ENCODE measurements at regions of chr3 and their contacts with region 1.

Region 1: GRCh38 chr3:27712136-27713077 is 9.7 kb downstream of the EOMES start:
- DNase-seq: peak; percentile 72 to 73
- ATAC-seq: peak; percentile 93 to 97 (median 96)
- H3K4me3 ChIP-seq: peak overlapping the region; percentile 43 to 69 (median 60)
- H3K27ac ChIP-seq: peak overlapping the region in 1 of 10 donors; percentile 80
- H3K4me1 ChIP-seq: peaks cover 5 to 33% (median 22%) of the 10 kb centered on the region in 9 donors
- H3K27me3 ChIP-seq: peaks cover 0 to 89% (median 63%) of the 10 kb centered on the region in 7 donors
- CTCF ChIP-seq: peak; percentile 48 to 85 (median 80)

Region 2: DNA sequence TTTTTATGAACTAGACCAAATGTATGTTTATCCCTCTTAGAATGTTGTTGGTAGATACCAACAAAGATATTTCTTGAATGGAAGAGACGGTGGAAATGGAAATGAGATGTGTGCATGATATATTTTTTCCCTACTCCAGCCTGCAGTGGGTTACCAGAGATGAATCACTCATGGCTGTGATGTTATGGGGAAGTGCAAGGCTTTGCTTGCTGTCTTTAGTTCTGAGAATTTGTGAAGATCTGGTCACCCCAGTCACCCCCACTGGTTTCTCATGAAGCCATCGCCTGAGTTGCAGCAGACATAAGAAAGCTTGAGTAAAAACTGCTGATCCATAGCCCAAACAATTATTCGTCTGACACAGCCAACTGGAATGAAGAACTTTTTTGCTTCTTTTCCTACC is 87.9 kb after region 1 on chr3:
- intact Hi-C with region 1: no loop called
- DNase-seq: no peak
- ATAC-seq: no peak
- H3K4me3 ChIP-seq: no peak overlapping the region
- H3K27ac ChIP-seq: no peak overlapping the region
- H3K4me1 ChIP-seq: no peaks in the 10 kb centered on the region
- H3K27me3 ChIP-seq: peaks cover 0 to 3% (median 0%) of the 10 kb centered on the region in 7 donors
- CTCF ChIP-seq: no peak

Region 3: GRCh38 chr3:28286595-28286994 is 574.2 kb after region 1 on chr3:
- intact Hi-C with region 1: loop called in 4 of 10 experiments (anchors 1 to 10 kb)
- DNase-seq: no peak
- ATAC-seq: peak in 6 of 8 donors; percentile 49 to 85 (median 68)
- H3K4me3 ChIP-seq: no peak overlapping the region
- H3K27ac ChIP-seq: no peak overlapping the region
- H3K4me1 ChIP-seq: peaks cover 0 to 14% (median 0%) of the 10 kb centered on the region in 9 donors
- H3K27me3 ChIP-seq: no peaks in the 10 kb centered on the region
- CTCF ChIP-seq: peak; percentile 29 to 69 (median 58)

Region 4: DNA sequence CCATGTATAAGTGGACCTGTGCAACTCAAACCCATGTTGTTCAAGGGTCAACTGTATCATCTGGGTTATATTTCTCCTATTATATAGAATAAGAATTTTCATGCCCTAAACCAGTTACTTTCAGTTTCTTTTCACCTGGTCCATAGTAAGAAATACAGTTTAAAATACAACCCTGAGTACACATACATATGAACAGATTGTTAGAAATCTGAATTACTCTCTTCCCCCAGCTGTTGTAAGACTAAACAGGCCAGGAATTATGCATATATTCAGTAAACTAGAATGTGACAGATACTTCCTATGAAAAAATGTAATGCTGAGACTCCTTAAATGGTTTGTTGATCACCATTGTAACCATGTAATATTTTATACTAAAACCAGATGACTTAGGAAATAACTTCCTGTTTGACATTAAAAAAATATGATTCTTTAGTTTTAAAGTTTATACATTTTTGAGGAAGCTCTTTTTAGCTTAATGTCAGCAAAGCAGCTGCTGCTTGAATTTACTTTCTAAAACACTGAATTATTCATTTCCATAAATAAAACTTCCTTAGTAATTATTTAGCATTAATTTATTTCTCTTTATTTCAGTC is 583.6 kb after region 1 on chr3:
- intact Hi-C with region 1: loop called in 1 of 10 experiments (anchors 10 kb)
- DNase-seq: no peak
- ATAC-seq: no peak
- H3K4me3 ChIP-seq: peak overlapping the region in 6 of 10 donors; percentile 16 to 33 (median 26)
- H3K27ac ChIP-seq: peak overlapping the region in 3 of 10 donors; percentile 18 to 34 (median 33)
- H3K4me1 ChIP-seq: peaks cover 0 to 26% (median 0%) of the 10 kb centered on the region in 9 donors
- H3K27me3 ChIP-seq: no peaks in the 10 kb centered on the region
- CTCF ChIP-seq: no peak

Region 5: DNA sequence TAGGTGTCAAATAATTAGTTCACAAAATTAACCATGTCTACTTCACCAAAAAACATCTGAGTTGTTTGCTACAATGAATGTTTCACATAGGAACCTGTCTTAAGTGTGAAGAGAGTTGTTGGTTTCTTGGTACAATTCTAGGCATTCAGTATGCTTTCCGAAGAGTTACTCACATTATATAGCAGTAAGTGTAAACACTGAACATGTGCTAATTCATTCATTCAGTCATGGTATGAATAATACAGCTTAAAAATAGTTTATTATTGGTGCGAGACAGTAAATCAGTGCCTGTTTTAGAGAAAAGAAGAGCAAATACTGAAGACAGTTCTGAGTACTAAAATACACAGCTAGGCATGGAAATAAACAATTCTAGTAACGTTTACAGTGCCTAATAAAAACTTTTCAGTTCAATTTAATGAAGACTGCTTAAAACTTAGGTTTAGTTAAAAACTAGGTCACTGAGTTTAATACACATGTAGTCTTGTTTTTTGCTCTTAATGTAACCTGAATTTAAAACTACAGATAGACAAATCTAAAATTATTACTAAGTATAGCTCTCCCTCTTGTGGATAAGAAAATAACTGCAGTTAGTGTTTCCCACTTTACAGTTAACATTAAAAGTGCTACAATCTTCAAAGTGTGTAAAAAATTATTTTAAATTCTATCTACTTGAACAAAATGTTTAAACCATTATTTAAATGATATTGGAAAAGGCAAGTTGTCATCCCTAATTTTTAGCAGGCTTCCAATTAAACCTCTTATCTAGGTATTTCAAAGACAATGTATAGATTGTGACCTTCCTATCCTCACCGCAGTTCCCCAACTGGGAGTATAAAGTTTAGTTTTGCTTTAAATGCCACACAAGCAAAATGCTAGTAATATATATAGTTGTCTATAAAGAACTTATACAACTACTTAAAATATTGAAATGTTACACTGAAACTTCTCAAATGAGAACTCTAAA is 616.1 kb after region 1 on chr3:
- intact Hi-C with region 1: loop called (anchors 2 to 10 kb)
- DNase-seq: no peak
- ATAC-seq: peak in 2 of 8 donors; percentile 29 to 52
- H3K4me3 ChIP-seq: no peak overlapping the region
- H3K27ac ChIP-seq: no peak overlapping the region
- H3K4me1 ChIP-seq: peaks cover 0 to 9% (median 0%) of the 10 kb centered on the region in 9 donors
- H3K27me3 ChIP-seq: no peaks in the 10 kb centered on the region
- CTCF ChIP-seq: peak; percentile 51 to 86 (median 77)